ENCODE measurements at regions of chr11 and their contacts with region 1.

Region 1: DNA sequence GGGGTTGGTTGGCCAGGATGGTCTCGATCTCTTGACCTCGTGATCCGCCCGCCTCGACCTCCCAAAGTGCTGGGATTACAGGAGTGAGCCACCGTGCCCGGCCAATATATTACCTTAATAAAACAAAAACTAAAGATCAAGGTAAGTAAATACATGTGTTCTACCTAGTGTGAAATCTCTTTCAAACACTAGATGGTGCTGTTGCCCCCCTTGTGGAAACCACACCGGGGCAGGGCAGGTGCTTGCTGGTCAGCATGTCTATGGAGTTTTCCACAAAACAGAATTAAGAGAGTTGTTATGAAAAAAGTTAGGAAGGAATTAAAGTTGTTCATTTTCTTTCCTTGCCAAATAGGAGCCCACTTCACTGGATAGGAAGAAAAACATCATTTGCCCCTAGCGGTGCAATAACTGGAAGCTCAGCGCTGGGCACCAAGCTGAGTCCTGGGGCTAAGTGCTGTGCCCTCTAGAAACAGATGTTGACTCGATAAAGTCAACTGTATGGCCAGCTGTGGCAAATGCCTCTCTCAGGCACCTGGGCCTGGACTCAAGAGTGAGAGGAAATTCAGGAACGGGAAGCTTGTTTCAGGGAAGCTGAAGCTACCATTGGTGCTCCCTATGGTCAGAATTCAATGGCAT is 6.3 kb upstream of the KCNJ5 start:
- DNase-seq: no peak
- ATAC-seq: peak; percentile 95
- H3K4me3 ChIP-seq: no peak overlapping the region
- H3K27ac ChIP-seq: no peak overlapping the region
- H3K4me1 ChIP-seq: no peaks in the 10 kb centered on the region
- H3K27me3 ChIP-seq: peaks cover 7 to 8% of the 10 kb centered on the region in 2 experiments; a peak in 3 of 4 replicates
- CTCF ChIP-seq: peak; percentile 67 to 90 (median 71)
- EP300 ChIP-seq: no peak
- POLR2A ChIP-seq: no peak
- RAD21 ChIP-seq: peak; percentile 97

Region 2: GRCh38 chr11:128172046-128172878 is 712.6 kb before region 1 on chr11:
- CTCF ChIA-PET with region 1: interaction called, 13 read pairs
- POLR2A ChIA-PET with region 1: no interaction called
- RAD21 ChIA-PET with region 1: interaction called, 3 read pairs
- SMC1A ChIA-PET with region 1: no interaction called
- in situ Hi-C with region 1: no loop called
- intact Hi-C with region 1: no loop called
- DNase-seq: peak; percentile 38
- ATAC-seq: peak; percentile 93
- H3K4me3 ChIP-seq: no peak overlapping the region
- H3K27ac ChIP-seq: no peak overlapping the region
- H3K4me1 ChIP-seq: no peaks in the 10 kb centered on the region
- H3K27me3 ChIP-seq: no peaks in the 10 kb centered on the region; a peak in 2 of 4 replicates
- CTCF ChIP-seq: peak; percentile 68 to 91 (median 72)
- EP300 ChIP-seq: no peak
- POLR2A ChIP-seq: no peak
- RAD21 ChIP-seq: peak; percentile 97

Region 3: DNA sequence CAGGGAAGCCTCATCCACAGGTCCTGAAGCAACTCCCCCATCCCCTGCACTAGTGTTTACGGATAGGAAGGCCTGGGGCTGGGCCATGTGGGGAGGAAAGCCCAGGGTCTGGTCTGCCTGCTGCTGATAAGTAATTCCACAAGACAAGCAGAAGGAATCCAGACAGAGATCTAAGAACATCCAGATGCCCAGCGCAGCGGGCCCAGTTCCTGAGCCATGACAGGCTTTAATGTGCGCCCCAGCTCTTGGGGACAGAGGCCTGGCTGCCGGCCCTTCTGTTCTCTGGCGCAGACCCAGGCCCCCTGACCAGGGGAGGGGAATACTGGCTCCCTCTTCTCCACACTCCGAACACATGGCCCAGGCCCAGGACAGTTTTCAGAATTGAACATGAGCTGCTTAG is 268.7 kb before region 1 on chr11:
- CTCF ChIA-PET with region 1: no interaction called
- POLR2A ChIA-PET with region 1: no interaction called
- RAD21 ChIA-PET with region 1: no interaction called
- SMC1A ChIA-PET with region 1: no interaction called
- in situ Hi-C with region 1: no loop called
- intact Hi-C with region 1: no loop called
- DNase-seq: no peak
- ATAC-seq: no peak
- H3K4me3 ChIP-seq: no peak overlapping the region
- H3K27ac ChIP-seq: no peak overlapping the region
- H3K4me1 ChIP-seq: peaks cover 34% of the 10 kb centered on the region
- H3K27me3 ChIP-seq: no peaks in the 10 kb centered on the region
- CTCF ChIP-seq: no peak
- EP300 ChIP-seq: no peak
- POLR2A ChIP-seq: no peak
- RAD21 ChIP-seq: no peak

Region 4: GRCh38 chr11:128919216-128919615 is 34.4 kb after region 1 on chr11:
- CTCF ChIA-PET with region 1: interaction called, 14 read pairs
- POLR2A ChIA-PET with region 1: no interaction called
- RAD21 ChIA-PET with region 1: interaction called, 5 read pairs
- SMC1A ChIA-PET with region 1: no interaction called
- in situ Hi-C with region 1: no loop called
- intact Hi-C with region 1: no loop called
- DNase-seq: no peak
- ATAC-seq: peak; percentile 66
- H3K4me3 ChIP-seq: no peak overlapping the region
- H3K27ac ChIP-seq: no peak overlapping the region
- H3K4me1 ChIP-seq: no peaks in the 10 kb centered on the region
- H3K27me3 ChIP-seq: no peaks in the 10 kb centered on the region
- CTCF ChIP-seq: no peak
- EP300 ChIP-seq: no peak
- POLR2A ChIP-seq: no peak
- RAD21 ChIP-seq: no peak

Region 5: GRCh38 chr11:128939591-128939990 is 54.8 kb after region 1 on chr11:
- CTCF ChIA-PET with region 1: interaction called, 21 read pairs
- POLR2A ChIA-PET with region 1: no interaction called
- RAD21 ChIA-PET with region 1: interaction called, 3 read pairs
- SMC1A ChIA-PET with region 1: interaction called, 4 read pairs
- in situ Hi-C with region 1: no loop called
- intact Hi-C with region 1: no loop called
- DNase-seq: no peak
- ATAC-seq: no peak
- H3K4me3 ChIP-seq: no peak overlapping the region
- H3K27ac ChIP-seq: no peak overlapping the region
- H3K4me1 ChIP-seq: no peaks in the 10 kb centered on the region
- H3K27me3 ChIP-seq: peaks cover 0 to 7% of the 10 kb centered on the region in 2 experiments; a peak in 2 of 4 replicates
- CTCF ChIP-seq: no peak
- EP300 ChIP-seq: no peak
- POLR2A ChIP-seq: no peak
- RAD21 ChIP-seq: no peak

Region 6: GRCh38 chr11:128956401-128957201 is 71.8 kb after region 1 on chr11:
- CTCF ChIA-PET with region 1: interaction called, 480 read pairs
- POLR2A ChIA-PET with region 1: interaction called, 3 read pairs
- RAD21 ChIA-PET with region 1: interaction called, 109 read pairs
- SMC1A ChIA-PET with region 1: interaction called, 249 read pairs
- in situ Hi-C with region 1: loop called (anchors 5 kb)
- intact Hi-C with region 1: loop called (anchors 1 kb)
- DNase-seq: peak; percentile 45
- ATAC-seq: peak; percentile 90
- H3K4me3 ChIP-seq: no peak overlapping the region
- H3K27ac ChIP-seq: no peak overlapping the region
- H3K4me1 ChIP-seq: no peaks in the 10 kb centered on the region
- H3K27me3 ChIP-seq: peaks cover 0 to 6% of the 10 kb centered on the region in 2 experiments; a peak in 1 of 4 replicates
- CTCF ChIP-seq: peak; percentile 65 to 79 (median 76)
- EP300 ChIP-seq: no peak
- POLR2A ChIP-seq: no peak
- RAD21 ChIP-seq: peak; percentile 78

Region 7: GRCh38 chr11:129331871-129332274 is 447.1 kb after region 1 on chr11:
- CTCF ChIA-PET with region 1: interaction called, 16 read pairs
- POLR2A ChIA-PET with region 1: no interaction called
- RAD21 ChIA-PET with region 1: interaction called, 5 read pairs
- SMC1A ChIA-PET with region 1: interaction called, 3 read pairs
- in situ Hi-C with region 1: loop called (anchors 10 kb)
- intact Hi-C with region 1: loop called (anchors 2 kb)
- DNase-seq: peak; percentile 11
- ATAC-seq: peak; percentile 99
- H3K4me3 ChIP-seq: no peak overlapping the region
- H3K27ac ChIP-seq: no peak overlapping the region
- H3K4me1 ChIP-seq: no peaks in the 10 kb centered on the region
- H3K27me3 ChIP-seq: no peaks in the 10 kb centered on the region
- CTCF ChIP-seq: peak; percentile 77 to 88 (median 86)
- EP300 ChIP-seq: no peak
- POLR2A ChIP-seq: no peak
- RAD21 ChIP-seq: peak; percentile 72